ENCODE measurements at regions of chr17 and their contacts with region 1.

Region 1: DNA sequence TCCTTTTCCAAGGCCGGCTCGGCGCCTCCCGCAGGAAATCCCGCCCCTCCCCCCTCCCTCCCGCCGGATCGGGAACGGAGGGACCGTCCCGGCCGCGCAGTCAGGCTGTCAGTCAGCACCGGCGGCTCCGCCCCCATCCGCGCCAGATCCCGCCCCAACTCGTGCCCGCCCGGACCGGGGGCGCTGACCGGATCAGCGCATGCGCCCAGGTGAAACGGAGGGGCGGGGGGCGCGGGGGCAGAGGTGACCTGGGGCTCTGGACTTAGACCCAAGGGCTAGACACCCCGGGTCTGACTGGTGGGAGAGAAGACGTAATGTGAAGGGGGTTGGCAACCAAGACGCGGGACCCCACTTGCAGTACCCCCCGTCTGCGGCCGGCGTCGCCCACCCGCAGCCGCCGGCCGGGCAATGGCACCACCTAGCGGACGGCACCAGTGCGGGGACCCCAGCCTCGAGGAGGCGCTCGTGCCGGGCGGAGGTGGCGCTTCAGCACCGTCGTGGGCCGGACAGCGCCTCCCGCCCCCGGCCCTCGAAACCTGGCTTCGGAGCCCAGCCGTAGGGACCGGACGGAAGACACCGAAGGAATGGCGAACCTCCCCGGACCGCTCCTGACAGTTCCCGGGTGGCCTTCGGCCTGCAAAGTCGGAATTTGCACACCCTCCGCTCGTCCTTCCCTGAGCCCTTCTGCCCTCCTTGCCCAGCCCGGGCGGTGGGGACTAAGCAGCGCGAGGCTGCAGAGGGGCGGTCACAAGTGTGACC is at the start of gene CASKIN2:
- DNase-seq: peak; percentile 97 to 98
- ATAC-seq: peak; percentile 88 to 91 (median 90)
- H3K4me3 ChIP-seq: peak within 1 kb of the TSS; percentile 98
- H3K27ac ChIP-seq: peak within 1 kb of the TSS; percentile 83
- H3K4me1 ChIP-seq: peaks cover 43% of the 10 kb centered on the region
- H3K27me3 ChIP-seq: no peaks in the 10 kb centered on the region
- CTCF ChIP-seq: peak; percentile 95
- total RNA-seq, gene CASKIN2: 26.3 to 33.5 (median 28.3) TPM

Region 2: DNA sequence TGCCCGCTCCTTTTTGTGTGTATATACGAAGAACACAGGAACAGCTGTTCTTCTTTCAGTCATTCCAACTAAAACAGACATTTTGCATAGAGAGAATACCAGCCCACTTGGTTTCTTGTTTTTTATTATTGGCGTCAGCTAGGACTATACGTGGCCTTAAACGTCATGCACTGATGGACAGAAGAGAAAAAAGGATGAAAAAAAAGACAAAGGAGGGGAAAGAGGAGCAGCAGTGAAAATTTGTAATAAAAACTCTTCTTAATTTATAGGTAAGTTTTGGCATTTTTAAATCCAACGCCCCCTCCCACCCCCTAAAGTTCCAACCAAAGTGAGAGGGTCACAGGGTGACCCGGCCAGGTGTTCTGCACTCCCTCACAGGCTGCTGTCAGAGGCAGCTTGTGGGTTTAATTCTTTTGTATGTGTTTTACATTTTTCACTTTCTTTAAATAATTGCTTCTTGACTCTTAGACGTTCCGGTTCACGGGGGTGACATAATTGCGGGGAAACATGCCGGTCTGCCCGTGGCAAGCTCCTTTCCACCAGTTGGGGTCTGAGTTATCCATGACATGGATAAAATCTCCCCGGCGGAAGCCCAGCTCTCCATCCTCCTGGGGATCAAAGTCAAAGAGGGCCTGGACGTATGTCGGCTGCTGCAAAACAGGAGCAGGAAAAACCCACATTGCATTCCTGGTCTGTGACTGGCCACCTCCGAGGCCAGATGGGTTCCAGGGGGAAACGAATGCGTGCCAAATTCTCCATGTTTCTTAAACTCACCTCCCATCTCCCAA is 195.6 kb before region 1 on chr17:
- intact Hi-C with region 1: loop called in 1 of 2 experiments (anchors 5 kb)
- DNase-seq: no peak
- ATAC-seq: no peak
- H3K4me3 ChIP-seq: no peak overlapping the region
- H3K27ac ChIP-seq: no peak overlapping the region
- H3K4me1 ChIP-seq: no peaks in the 10 kb centered on the region
- H3K27me3 ChIP-seq: no peaks in the 10 kb centered on the region
- CTCF ChIP-seq: no peak

Region 3: DNA sequence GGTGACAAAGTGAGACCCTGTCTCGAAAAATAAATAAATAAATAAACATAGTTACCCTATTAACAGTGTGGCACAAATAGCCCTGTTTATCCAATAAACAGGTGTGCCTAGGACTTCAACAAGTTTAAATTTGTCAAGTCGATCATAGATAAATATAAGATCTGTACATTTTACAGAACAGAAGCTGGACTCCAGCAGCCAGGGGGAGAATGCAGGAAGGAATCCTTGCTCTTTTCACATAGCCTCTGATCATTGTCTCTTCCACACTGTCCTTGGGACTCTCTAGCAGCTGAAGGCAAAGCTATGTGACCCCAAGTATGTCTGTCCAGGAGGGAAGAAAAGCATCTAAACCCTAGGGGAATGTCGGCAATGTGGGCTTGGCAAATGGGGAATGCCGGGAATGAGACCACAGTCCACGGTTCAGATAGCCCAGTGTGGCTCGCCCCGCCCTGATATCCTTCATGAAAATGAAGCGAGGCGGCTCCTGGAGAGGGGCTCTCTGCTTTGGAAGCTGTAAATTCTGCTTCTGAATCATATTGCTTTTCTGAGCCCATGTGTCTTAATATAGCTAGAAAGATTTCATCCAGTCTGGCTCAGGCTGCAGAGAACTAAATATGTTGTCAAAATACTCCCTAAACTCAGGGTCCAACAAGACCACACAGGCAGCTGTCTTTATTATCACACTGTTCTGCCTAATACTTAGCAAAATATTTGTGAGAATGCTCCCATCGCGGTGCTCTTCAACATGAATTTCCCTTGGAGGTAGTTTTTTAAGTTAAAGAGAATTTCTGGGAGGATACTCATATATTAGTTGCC is 85.3 kb before region 1 on chr17:
- intact Hi-C with region 1: loop called (anchors 1 to 5 kb)
- DNase-seq: no peak
- ATAC-seq: peak; percentile 48 to 72 (median 50)
- H3K4me3 ChIP-seq: peak overlapping the region; percentile 15
- H3K27ac ChIP-seq: peak overlapping the region; percentile 82
- H3K4me1 ChIP-seq: peaks cover 19% of the 10 kb centered on the region
- H3K27me3 ChIP-seq: no peaks in the 10 kb centered on the region
- CTCF ChIP-seq: no peak

Region 4: GRCh38 chr17:75456417-75457046 is 59.1 kb before region 1 on chr17 and contains the start of gene TMEM94:
- intact Hi-C with region 1: loop called (anchors 5 kb)
- DNase-seq: peak; percentile 93 to 97
- ATAC-seq: peak; percentile 89 to 96 (median 93)
- H3K4me3 ChIP-seq: peak within 1 kb of the TSS; percentile 95
- H3K27ac ChIP-seq: peak within 1 kb of the TSS; percentile 98
- H3K4me1 ChIP-seq: peaks cover 42% of the 10 kb centered on the region
- H3K27me3 ChIP-seq: no peaks in the 10 kb centered on the region
- CTCF ChIP-seq: no peak
- total RNA-seq, gene TMEM94: 43.4 to 64.3 (median 49.6) TPM

Region 5: GRCh38 chr17:75487351-75488070 is 28.2 kb before region 1 on chr17:
- intact Hi-C with region 1: loop called in 1 of 2 experiments (anchors 2 kb)
- DNase-seq: peak; percentile 45 to 65
- ATAC-seq: peak in 3 of 4 donors; percentile 10 to 45 (median 24)
- H3K4me3 ChIP-seq: no peak overlapping the region
- H3K27ac ChIP-seq: peak overlapping the region; percentile 76
- H3K4me1 ChIP-seq: peaks cover 84% of the 10 kb centered on the region
- H3K27me3 ChIP-seq: no peaks in the 10 kb centered on the region
- CTCF ChIP-seq: no peak

Region 6: DNA sequence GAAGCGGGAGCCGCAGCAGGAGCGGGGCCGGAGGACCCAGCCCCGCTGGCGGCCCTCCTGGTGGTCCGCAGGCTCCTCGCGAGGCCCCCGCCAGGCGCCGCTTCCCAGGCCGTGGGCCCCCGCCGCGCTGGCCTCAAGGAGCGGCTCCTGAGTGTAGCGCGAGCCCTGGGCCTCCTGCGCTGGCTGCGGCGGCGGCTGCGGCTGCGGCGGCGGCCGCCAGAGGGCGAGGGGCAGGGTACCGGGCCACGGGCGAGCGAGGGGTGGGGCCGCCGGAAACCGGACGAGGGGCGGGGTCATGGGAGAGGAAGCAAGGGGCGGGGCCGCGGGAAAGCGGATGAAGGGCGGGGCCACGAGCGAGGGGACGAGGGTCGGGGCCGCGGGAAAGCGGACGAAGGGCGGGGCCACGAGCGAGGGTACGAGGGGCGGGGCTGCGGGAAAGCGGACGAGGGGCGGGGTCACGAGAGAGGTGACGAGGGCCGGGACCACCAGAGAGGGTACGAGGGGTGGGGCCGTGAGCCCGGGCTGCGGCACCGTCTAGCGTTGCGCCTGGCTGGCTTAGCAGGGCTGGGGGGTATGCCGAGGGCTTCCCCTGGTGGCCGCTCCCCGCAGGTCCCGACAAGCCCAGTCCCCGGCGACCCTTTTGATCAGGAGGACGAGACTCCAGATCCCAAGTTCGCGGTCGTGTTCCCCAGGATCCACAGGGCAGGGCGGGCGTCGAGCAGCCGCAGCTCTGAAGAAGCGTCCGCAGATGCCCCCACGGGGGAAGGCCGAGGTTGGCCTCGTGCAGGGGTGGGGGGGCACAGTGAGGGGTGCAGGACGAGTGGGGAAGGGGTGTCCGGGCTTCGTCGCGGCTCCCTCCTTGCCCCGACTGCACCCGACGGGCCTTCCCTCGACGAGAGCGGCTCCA is 73.6 kb after region 1 on chr17:
- intact Hi-C with region 1: loop called in 1 of 2 experiments (anchors 5 kb)
- DNase-seq: peak; percentile 97 to 98
- ATAC-seq: peak; percentile 91 to 95 (median 94)
- H3K4me3 ChIP-seq: peak overlapping the region; percentile 76
- H3K27ac ChIP-seq: peak overlapping the region; percentile 76
- H3K4me1 ChIP-seq: peaks cover 3% of the 10 kb centered on the region
- H3K27me3 ChIP-seq: peaks cover 0 to 11% (median 6%) of the 10 kb centered on the region in 3 donors
- CTCF ChIP-seq: peak; percentile 58

Measured in psoas muscle (tissue), 8 donors.